ENCODE measurements at regions of chr2 and their contacts with region 1.

Region 1: GRCh38 chr2:231642631-231643494 is 50.2 kb downstream of the TEX44 start:
- DNase-seq: peak; percentile 63
- ATAC-seq: peak; percentile 90
- H3K4me3 ChIP-seq: peak overlapping the region; percentile 63; the same call in 1 of the 2 replicates
- H3K27ac ChIP-seq: peak overlapping the region; percentile 56
- H3K4me1 ChIP-seq: peaks cover 14% of the 10 kb centered on the region
- H3K27me3 ChIP-seq: no peaks in the 10 kb centered on the region
- CTCF ChIP-seq: no peak
- EP300 ChIP-seq: no peak
- POLR2A ChIP-seq: no peak
- RAD21 ChIP-seq: no peak

Region 2: DNA sequence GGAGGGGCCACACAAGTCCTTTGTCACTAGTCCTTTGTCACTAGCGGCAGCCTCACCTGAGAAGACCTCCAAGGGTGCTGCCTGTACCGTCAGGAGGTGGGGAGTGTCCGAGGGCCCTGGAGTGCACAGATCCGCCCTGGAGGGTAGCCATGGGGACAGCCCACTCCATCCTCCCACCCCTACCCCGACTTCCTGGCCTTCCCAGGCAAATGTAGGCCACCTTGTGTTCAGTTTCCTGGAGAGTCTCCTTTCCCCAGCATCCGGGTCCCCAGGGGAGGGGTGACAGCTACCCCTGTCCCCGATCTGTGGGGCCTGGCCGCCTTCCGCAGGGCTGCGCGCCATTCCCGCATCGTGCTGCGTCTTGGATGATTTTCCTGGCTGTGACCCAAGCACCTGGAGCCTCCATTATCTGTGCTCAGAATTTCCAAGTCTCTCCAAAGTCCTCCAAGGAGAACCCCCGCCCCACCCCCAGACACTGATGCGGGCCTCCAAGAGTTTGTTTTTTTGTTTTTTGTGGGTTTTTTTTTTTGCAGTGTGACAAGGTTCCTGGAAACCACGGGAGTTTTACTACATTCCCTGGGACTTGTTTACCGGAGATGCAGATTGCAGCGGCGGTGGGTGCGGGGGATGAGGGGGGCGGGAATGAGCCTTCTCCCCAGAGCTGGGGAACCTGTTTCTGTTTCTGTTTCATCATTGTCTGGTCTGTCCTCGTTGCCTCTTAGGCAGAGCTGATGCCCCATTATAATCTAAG is 21.6 kb before region 1 on chr2:
- CTCF ChIA-PET with region 1: interaction called, 10 read pairs
- POLR2A ChIA-PET with region 1: interaction called, 13 read pairs
- RAD21 ChIA-PET with region 1: no interaction called
- SMC1A ChIA-PET with region 1: interaction called, 3 read pairs
- in situ Hi-C with region 1: no loop called
- intact Hi-C with region 1: no loop called
- DNase-seq: no peak
- ATAC-seq: 0 out of 3 replicates have a peak, but pooled peaks have one; percentile 26
- H3K4me3 ChIP-seq: no peak overlapping the region
- H3K27ac ChIP-seq: no peak overlapping the region
- H3K4me1 ChIP-seq: no peaks in the 10 kb centered on the region; the same call in 1 of the 2 replicates
- H3K27me3 ChIP-seq: no peaks in the 10 kb centered on the region; a peak in 1 of 4 replicates
- CTCF ChIP-seq: no peak
- EP300 ChIP-seq: no peak
- POLR2A ChIP-seq: no peak
- RAD21 ChIP-seq: no peak

Region 3: DNA sequence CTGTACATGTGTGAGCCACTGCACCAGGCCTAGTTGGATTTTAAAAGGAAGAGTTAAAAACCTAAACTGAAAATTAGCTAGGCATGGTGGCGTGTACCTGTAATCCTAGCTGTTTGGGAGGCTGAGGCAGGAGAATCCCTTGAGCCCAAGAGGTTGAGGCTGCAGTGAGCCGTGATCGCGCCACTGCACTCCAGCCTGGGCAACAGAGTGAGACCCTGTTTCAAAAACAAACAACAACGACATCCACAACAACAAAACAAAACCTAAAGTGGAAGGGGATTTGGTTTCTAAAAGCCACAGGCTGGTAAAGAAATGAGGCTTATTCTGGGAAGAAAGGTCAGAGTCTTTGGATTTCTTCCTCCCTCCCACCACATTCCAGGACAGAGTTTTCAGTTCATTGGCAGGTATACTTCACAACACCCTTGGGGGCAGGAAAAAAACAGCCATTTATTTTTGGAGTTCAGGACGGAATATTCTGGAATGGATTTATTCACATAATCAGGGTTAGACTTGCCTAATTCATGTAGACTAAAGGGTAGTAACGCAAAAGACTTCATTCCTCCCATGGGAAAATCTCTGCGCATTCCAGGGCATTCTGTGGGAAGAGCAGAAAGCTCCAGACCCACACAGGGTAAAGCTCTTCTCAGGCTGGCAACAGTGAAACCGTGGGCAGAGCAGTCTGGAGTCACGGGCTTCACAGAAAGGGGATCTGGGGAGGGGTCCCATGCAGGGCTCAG is 15.3 kb before region 1 on chr2:
- CTCF ChIA-PET with region 1: interaction called, 10 read pairs
- POLR2A ChIA-PET with region 1: interaction called, 13 read pairs
- RAD21 ChIA-PET with region 1: interaction called, 3 read pairs
- SMC1A ChIA-PET with region 1: interaction called, 4 read pairs
- in situ Hi-C with region 1: no loop called
- intact Hi-C with region 1: no loop called
- DNase-seq: no peak
- ATAC-seq: no peak; the same call in 2 of the 3 replicates
- H3K4me3 ChIP-seq: no peak overlapping the region
- H3K27ac ChIP-seq: no peak overlapping the region
- H3K4me1 ChIP-seq: no peaks in the 10 kb centered on the region
- H3K27me3 ChIP-seq: no peaks in the 10 kb centered on the region; a peak in 1 of 4 replicates
- CTCF ChIP-seq: no peak
- EP300 ChIP-seq: no peak
- POLR2A ChIP-seq: no peak
- RAD21 ChIP-seq: no peak

Measured in GM12878 (cell line).